Activated T-helper 1 cell treated with anti-CD3 and anti-CD28 coated beads, Interleukin-12 subunit alpha, Interleukin-12 subunit beta, Interleukin-2, Interleukin-4 antibody, amounts not matched to agents 30 ng/mL and 10 ng/mL and 1 ng/mL, durations not matched to agents 14 hours and 24 hours and 36 hours (primary cell): ENCODE measurements at regions of chr3 and their contacts with region 1.

Region 1: GRCh38 chr3:144221761-144222160 is 250.1 kb downstream of the DIPK2A start:
- DNase-seq: no peak
- H3K4me3 Mint-ChIP-seq: no peak overlapping the region
- H3K27ac Mint-ChIP-seq: no peak overlapping the region
- H3K4me1 Mint-ChIP-seq: no peaks in the 10 kb centered on the region
- H3K27me3 Mint-ChIP-seq: peaks cover 3% of the 10 kb centered on the region

Region 2: DNA sequence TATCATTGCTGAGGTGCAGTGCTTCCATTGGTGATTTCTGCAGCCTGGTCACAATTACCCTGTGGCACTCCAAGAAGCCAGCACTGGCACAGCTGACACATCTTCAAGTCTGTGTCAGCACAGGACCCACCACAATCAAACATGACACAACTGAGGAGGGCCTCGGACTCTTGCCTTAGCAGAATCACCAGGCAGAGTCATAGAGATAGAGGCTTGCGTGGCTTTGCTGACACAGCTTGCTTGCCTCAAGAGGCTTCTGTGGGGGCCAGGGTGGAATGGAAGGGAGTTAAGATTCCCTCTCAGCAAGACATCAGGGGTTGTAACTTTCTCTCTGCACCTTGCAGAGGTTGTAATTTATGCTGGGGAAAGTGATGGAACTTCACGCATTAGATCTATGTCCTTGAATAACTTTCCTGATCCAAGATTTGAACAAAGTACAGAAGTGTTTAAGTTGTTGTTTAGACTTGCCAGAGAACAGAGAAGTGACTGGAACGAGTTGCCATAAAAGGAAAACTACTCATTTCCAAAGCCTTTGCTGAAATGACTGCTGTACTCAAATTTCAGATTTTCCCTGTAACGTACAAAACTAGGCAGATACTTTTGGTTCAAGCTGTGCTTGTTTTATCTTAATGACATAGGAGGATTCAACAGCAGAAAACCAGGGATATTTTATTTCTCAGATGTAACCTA is 79.5 kb before region 1 on chr3:
- intact Hi-C with region 1: loop called (anchors 2 kb)
- DNase-seq: no peak
- H3K4me3 Mint-ChIP-seq: no peak overlapping the region
- H3K27ac Mint-ChIP-seq: no peak overlapping the region
- H3K4me1 Mint-ChIP-seq: no peaks in the 10 kb centered on the region
- H3K27me3 Mint-ChIP-seq: no peaks in the 10 kb centered on the region

Region 3: DNA sequence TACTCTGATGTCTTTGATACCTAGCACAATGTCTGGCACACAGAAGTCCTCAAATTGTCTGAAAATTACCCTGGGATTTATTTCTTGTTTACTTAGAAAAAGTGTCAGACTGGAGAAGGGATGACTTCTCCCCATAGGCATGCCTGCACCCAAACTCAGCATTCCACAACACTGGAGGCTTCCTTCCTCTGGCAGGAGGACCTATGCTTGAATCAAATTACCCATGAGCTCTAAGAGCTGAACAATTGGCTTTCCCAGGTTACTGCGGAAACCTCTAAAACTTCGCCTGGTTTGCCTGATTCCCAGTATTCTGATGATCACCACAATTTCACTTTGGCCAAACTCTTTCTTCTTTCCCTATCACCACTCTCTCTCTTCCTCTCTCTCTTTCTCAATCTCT is 32.7 kb before region 1 on chr3:
- intact Hi-C with region 1: no loop called
- DNase-seq: no peak
- H3K4me3 Mint-ChIP-seq: no peak overlapping the region
- H3K27ac Mint-ChIP-seq: no peak overlapping the region
- H3K4me1 Mint-ChIP-seq: no peaks in the 10 kb centered on the region
- H3K27me3 Mint-ChIP-seq: no peaks in the 10 kb centered on the region